ENCODE measurements at regions of chr10 and their contacts with region 1.

Region 1: DNA sequence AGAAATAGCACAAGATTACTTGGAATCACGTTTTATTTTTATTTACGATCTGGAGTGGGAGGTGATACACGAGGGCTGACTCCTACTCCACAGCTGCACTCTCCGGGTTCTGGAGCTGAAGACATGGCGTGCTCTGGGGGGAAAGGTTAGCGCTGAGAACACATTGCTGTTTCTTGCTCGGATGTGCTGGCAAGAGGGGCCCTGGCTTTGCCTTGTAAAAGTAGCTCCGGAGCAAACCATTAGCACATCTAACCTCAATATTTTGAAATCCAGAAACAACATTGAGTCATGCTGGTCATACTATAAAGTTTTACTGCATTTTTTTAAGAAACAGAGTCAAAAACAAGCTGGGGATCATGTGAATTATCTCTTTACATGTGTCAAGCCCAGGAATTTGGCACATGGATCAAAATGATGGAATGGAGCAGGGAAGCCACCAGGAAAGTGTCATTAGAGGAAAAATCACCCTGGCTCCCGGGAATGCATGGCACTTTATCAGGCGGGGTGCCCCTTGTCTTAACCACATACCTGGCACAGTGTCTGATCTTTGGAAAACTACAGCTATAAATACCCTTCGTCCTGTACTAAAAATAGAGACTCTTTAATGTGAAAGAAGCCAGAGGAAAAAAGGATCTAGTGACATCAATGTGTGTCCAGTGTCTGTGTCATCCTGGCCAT is 31.6 kb upstream of the LYZL1 start:
- DNase-seq: peak in 1 of 2 donors; percentile 83
- H3K4me3 ChIP-seq: peak overlapping the region in 1 of 2 donors; percentile 17
- H3K27ac ChIP-seq: peak overlapping the region; percentile 13 to 41
- H3K4me1 ChIP-seq: peaks cover 0 to 10% of the 10 kb centered on the region in 2 donors
- H3K27me3 ChIP-seq: no peaks in the 10 kb centered on the region
- CTCF ChIP-seq: no peak

Region 2: GRCh38 chr10:28663576-28664313 is 593.5 kb before region 1 on chr10:
- intact Hi-C with region 1: loop called (anchors 5 kb)
- DNase-seq: peak; percentile 21 to 87
- H3K4me3 ChIP-seq: no peak overlapping the region
- H3K27ac ChIP-seq: peak overlapping the region; percentile 47 to 62
- H3K4me1 ChIP-seq: peaks cover 0 to 5% of the 10 kb centered on the region in 2 donors
- H3K27me3 ChIP-seq: no peaks in the 10 kb centered on the region
- CTCF ChIP-seq: peak; percentile 88 to 98 (median 97)

Region 3: GRCh38 chr10:29141063-29141462 is 116.2 kb before region 1 on chr10:
- intact Hi-C with region 1: loop called (anchors 10 kb)
- DNase-seq: no peak
- H3K4me3 ChIP-seq: no peak overlapping the region
- H3K27ac ChIP-seq: peak overlapping the region; percentile 8 to 58
- H3K4me1 ChIP-seq: peaks cover 0 to 6% of the 10 kb centered on the region in 2 donors
- H3K27me3 ChIP-seq: no peaks in the 10 kb centered on the region
- CTCF ChIP-seq: no peak